ENCODE measurements at regions of chr2 and their contacts with region 1.

Region 1: DNA sequence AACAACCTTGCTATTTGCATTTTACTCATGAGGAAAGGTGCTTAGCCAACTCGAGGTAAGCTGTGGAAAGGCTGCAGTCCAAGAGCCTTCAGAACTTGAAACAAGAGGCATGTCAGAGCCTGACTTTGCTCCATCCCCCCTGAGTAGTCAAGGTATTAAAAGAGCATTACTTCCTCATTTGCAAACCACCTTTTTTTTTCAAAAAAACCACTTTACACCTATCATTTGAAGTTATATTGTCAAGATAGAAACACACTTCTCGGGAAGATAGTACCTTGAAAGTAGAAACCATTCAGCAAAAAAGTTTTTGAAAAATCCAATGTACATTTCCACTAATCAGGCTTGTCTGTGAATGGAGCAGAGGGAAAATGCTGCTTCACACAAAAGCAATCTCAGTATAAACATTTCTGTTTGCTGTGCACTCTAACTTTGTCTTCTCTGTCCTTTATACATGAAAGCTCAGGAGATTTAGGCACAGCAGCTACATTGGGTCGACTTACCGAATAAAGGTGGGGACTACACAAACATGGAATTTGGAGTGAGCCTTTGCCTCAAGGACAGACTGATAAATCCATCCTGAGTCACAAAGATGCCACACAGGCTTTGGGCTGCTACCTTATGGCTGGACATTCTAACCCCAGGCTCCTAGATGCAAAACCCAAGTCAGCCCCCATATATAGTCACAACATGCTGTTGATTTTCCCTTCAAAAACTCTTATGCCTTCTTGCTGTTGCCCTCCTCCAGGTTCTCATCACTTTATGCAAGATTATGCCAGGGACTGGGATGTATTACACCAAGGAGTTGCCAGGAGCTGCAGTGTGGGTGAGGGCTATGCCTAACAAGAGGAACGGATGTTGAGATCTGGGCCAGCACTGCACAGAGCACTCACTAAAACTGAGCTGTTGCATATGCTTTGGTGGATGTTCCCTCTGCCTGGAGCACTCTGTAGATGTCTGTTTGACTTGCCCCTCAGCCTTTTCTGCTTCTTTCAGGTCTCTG is 41.4 kb upstream of the EML4 start:
- DNase-seq: no peak
- H3K4me3 ChIP-seq: no peak overlapping the region
- H3K4me3 Mint-ChIP-seq: peak overlapping the region in 1 of 2 donors; percentile 66
- H3K27ac ChIP-seq: no peak overlapping the region
- H3K27ac Mint-ChIP-seq: peak overlapping the region in 2 of 7 donors; percentile 17 to 53
- H3K4me1 ChIP-seq: peaks cover 48 to 63% of the 10 kb centered on the region in 2 donors
- H3K4me1 Mint-ChIP-seq: peaks cover 68% of the 10 kb centered on the region
- H3K27me3 ChIP-seq: peaks cover 40 to 41% of the 10 kb centered on the region in 2 donors
- H3K27me3 Mint-ChIP-seq: peaks cover 49 to 62% (median 57%) of the 10 kb centered on the region in 3 donors
- CTCF ChIP-seq: no peak

Region 2: GRCh38 chr2:42163444-42164045 is 35.8 kb after region 1 on chr2:
- intact Hi-C with region 1: loop called (anchors 5 kb)
- DNase-seq: no peak
- H3K4me3 ChIP-seq: no peak overlapping the region
- H3K4me3 Mint-ChIP-seq: no peak overlapping the region
- H3K27ac ChIP-seq: no peak overlapping the region
- H3K27ac Mint-ChIP-seq: no peak overlapping the region
- H3K4me1 ChIP-seq: peaks cover under 1 to 1% of the 10 kb centered on the region in 2 donors
- H3K4me1 Mint-ChIP-seq: no peaks in the 10 kb centered on the region
- H3K27me3 ChIP-seq: peaks cover 4 to 13% of the 10 kb centered on the region in 2 donors
- H3K27me3 Mint-ChIP-seq: peaks cover 18 to 26% (median 21%) of the 10 kb centered on the region in 3 donors
- CTCF ChIP-seq: no peak

Region 3: DNA sequence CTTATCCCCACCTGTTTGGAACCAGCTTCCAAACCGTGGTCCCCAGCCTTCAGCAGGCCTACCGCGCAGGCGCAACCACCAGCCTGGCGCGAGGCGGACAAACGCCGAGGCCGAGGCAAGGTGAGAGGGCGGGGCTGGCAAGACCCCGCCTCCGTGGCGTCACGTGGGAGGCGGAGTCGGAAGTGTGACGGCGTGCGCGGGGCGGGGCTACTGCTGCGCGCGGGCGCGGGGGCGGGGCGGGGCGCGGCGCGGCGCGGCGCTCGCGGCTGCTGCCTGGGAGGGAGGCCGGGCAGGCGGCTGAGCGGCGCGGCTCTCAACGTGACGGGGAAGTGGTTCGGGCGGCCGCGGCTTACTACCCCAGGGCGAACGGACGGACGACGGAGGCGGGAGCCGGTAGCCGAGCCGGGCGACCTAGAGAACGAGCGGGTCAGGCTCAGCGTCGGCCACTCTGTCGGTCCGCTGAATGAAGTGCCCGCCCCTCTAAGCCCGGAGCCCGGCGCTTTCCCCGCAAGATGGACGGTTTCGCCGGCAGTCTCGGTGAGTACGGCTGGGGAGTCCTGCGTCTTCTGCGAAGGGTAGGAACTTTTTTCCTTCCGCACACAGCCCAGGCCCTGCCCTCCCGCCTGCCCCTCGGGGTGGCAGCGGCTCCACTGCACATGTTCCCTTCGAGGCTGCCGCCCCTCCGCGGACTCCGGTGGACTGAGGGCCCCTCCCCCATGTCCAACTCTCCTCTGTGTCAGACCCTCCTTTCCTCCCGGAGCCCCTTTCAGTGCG is 41.6 kb after region 1 on chr2 and contains the start of gene EML4:
- intact Hi-C with region 1: loop called (anchors 5 kb)
- DNase-seq: peak; percentile 85 to 93 (median 86)
- H3K4me3 ChIP-seq: peak within 1 kb of the TSS; percentile 73 to 87 (median 86)
- H3K4me3 Mint-ChIP-seq: peak within 1 kb of the TSS in 1 of 2 donors; percentile 57
- H3K27ac ChIP-seq: peak within 1 kb of the TSS; percentile 85 to 90
- H3K27ac Mint-ChIP-seq: peak within 1 kb of the TSS in 4 of 7 donors; percentile 15 to 84 (median 63)
- H3K4me1 ChIP-seq: peaks cover 25 to 32% of the 10 kb centered on the region in 2 donors
- H3K4me1 Mint-ChIP-seq: peaks cover 11% of the 10 kb centered on the region
- H3K27me3 ChIP-seq: peaks cover 0 to 4% of the 10 kb centered on the region in 2 donors
- H3K27me3 Mint-ChIP-seq: peaks cover under 1 to 9% (median 4%) of the 10 kb centered on the region in 3 donors
- CTCF ChIP-seq: no peak
- polyA plus RNA-seq, gene EML4: 11.5 to 24.3 (median 15.0) TPM

Measured in CD14-positive monocyte (primary cell).